B cell (primary cell): ENCODE measurements at regions of chr19 and their contacts with region 1.

Region 1: GRCh38 chr19:37466798-37467607 is at the start of gene ZNF569:
- DNase-seq: peak; percentile 95
- ATAC-seq: peak; percentile 69
- H3K4me3 ChIP-seq: peak within 1 kb of the TSS; percentile 80 to 98 (median 86)
- H3K4me3 Mint-ChIP-seq: peak within 1 kb of the TSS; percentile 99
- H3K27ac ChIP-seq: peak within 1 kb of the TSS; percentile 77
- H3K27ac Mint-ChIP-seq: peak within 1 kb of the TSS; percentile 98
- H3K4me1 ChIP-seq: peaks cover 14 to 32% of the 10 kb centered on the region in 2 donors
- H3K4me1 Mint-ChIP-seq: peaks cover 32% of the 10 kb centered on the region
- H3K27me3 ChIP-seq: no peaks in the 10 kb centered on the region
- H3K27me3 Mint-ChIP-seq: no peaks in the 10 kb centered on the region
- CTCF ChIP-seq: no peak
- total RNA-seq, gene ZNF569: 11.1 and 13.9 TPM in 2 replicates

Region 2: GRCh38 chr19:36665832-36666231 is 801.2 kb before region 1 on chr19:
- CTCF ChIA-PET with region 1: no interaction called
- POLR2A ChIA-PET with region 1: no interaction called
- intact Hi-C with region 1: loop called (anchors 5 kb)
- DNase-seq: peak; percentile 31
- ATAC-seq: no peak
- H3K4me3 ChIP-seq: peak overlapping the region; percentile 63 to 91 (median 80)
- H3K4me3 Mint-ChIP-seq: peak overlapping the region; percentile 98
- H3K27ac ChIP-seq: peak overlapping the region in 1 of 2 donors; percentile 81
- H3K27ac Mint-ChIP-seq: peak overlapping the region; percentile 90
- H3K4me1 ChIP-seq: peaks cover 15 to 19% of the 10 kb centered on the region in 2 donors
- H3K4me1 Mint-ChIP-seq: peaks cover 28% of the 10 kb centered on the region
- H3K27me3 ChIP-seq: no peaks in the 10 kb centered on the region
- H3K27me3 Mint-ChIP-seq: no peaks in the 10 kb centered on the region
- CTCF ChIP-seq: no peak

Region 3: DNA sequence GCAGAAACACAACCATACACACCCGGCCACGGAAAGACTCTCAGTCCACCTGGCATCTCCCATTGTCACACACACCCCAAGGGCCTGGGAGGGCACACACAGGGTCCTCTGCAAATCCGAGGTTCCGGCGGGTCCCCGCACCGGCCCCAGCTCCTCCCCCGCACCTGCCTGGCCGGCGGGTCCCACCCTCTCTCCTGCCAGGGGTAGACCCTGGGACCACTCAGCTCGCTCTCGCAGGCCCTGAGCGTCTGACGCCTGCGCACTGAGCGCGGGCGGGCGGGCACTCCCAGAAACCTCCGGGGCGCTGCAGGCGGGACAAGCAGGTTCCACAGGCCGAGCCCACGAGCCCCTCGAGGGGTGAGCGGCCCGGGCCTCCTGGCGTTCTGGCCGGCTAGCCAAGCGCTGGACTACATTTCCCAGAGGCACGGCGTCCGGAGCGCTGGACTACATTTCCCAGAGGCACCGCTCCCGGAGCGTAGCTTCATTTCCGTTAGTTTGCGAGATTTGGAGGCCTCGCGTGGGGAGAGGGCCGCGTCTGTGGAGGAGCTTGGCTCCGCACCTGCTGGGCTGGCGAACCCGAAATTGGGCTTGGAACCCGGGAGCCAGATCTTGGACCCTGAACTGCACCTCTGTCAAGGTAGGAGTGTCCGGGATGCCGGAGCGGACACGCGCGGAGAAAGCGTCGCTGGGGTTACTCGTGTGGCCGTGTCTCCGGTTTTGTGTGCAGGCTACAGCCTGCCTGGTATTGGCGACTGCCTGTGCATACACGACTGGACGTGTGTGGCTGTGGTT is 388.9 kb before region 1 on chr19 and contains the start of gene ZNF420:
- CTCF ChIA-PET with region 1: no interaction called
- POLR2A ChIA-PET with region 1: no interaction called
- intact Hi-C with region 1: loop called (anchors 5 kb)
- DNase-seq: peak; percentile 96
- ATAC-seq: peak; percentile 95
- H3K4me3 ChIP-seq: peak within 1 kb of the TSS; percentile 76 to 93 (median 85)
- H3K4me3 Mint-ChIP-seq: peak within 1 kb of the TSS; percentile 93
- H3K27ac ChIP-seq: peak within 1 kb of the TSS; percentile 71 to 89
- H3K27ac Mint-ChIP-seq: peak within 1 kb of the TSS; percentile 96
- H3K4me1 ChIP-seq: peaks cover 14 to 20% of the 10 kb centered on the region in 2 donors
- H3K4me1 Mint-ChIP-seq: peaks cover 29% of the 10 kb centered on the region
- H3K27me3 ChIP-seq: no peaks in the 10 kb centered on the region
- H3K27me3 Mint-ChIP-seq: no peaks in the 10 kb centered on the region
- CTCF ChIP-seq: no peak
- total RNA-seq, gene ZNF420: 17.4 and 24.9 TPM in 2 replicates

Region 4: DNA sequence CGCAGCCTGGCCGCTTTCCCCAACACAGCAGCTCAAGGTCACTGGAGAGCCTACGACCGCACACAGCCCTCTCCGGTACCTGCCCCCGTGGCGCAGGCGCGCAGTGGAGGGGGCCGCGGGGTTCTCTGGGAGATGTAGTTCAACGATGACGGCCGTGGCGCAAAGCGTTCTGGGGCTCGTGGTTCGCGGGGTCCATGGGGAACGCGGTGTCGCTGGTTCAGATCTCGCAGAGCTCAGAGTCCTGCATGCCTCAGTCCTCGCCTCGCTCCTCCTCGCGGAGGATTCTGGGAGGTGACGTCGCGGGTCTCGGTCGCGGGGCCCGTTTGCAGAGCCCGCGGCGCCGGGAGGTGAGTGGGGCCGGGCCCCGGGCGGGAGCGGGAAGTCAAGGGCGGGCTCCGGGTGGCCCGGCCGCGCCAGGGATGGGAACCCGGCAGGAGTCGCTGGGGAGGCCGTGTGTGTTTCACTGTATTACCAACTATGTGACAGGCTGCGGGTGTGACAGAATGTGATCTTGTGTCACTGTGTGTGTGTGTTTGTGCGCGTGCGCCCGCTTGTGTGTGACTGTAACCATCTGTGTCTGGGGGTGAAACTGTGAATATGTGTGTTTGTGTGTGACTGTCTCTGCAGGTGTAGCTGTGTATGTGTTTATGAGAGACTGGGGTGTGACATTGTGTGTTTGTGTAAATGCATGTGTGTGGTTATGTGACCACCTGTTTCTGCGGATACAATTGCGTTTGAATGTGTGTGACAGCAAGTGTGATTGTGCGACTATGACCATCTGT is 95.9 kb before region 1 on chr19 and contains the start of gene ZNF527:
- CTCF ChIA-PET with region 1: interaction called, 3 read pairs
- POLR2A ChIA-PET with region 1: interaction called, 7 read pairs
- intact Hi-C with region 1: loop called (anchors 1 kb)
- DNase-seq: peak; percentile 98
- ATAC-seq: peak; percentile 96
- H3K4me3 ChIP-seq: peak within 1 kb of the TSS; percentile 59 to 87 (median 79)
- H3K4me3 Mint-ChIP-seq: peak within 1 kb of the TSS; percentile 99
- H3K27ac ChIP-seq: peak within 1 kb of the TSS; percentile 73 to 87
- H3K27ac Mint-ChIP-seq: peak within 1 kb of the TSS; percentile 98
- H3K4me1 ChIP-seq: peaks cover 5 to 14% of the 10 kb centered on the region in 2 donors
- H3K4me1 Mint-ChIP-seq: peaks cover 12% of the 10 kb centered on the region
- H3K27me3 ChIP-seq: no peaks in the 10 kb centered on the region
- H3K27me3 Mint-ChIP-seq: no peaks in the 10 kb centered on the region
- CTCF ChIP-seq: peak; percentile 12
- total RNA-seq, gene ZNF527: 9.0 and 11.4 TPM in 2 replicates

Region 5: DNA sequence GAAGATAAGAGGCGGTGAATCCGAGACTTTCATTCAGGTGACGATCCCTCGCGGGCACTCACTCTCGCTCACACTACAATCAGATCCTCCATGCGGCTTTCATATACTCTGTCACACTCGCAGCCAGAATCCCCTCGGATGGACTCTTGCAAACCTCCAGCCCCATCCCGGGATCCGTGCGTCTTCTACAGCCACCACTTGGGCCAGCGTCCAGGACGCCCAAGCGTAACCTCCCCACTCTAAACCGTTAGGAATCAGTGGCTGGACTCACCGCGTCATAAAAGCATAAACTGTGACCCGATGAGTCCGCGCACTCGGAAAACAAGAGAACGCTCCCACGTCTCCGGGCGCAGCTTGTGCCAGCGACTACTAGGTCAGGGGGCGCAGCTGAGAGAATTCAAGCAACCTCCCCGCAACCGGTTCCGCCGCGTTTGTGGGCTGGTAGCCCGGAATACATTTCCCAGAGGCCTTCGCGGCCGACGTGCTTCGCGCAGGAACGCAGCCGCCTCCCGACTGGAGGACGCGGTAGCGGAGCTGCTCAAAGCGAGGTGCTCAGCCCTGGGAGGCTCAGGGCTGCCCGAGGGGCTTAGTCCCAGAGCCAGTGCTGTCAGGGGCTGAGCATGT is 225.0 kb after region 1 on chr19:
- CTCF ChIA-PET with region 1: no interaction called
- POLR2A ChIA-PET with region 1: no interaction called
- intact Hi-C with region 1: loop called (anchors 5 kb)
- DNase-seq: peak; percentile 90
- ATAC-seq: peak; percentile 97
- H3K4me3 ChIP-seq: peak overlapping the region; percentile 53 to 80 (median 68)
- H3K4me3 Mint-ChIP-seq: peak overlapping the region; percentile 99
- H3K27ac ChIP-seq: peak overlapping the region; percentile 68 to 74
- H3K27ac Mint-ChIP-seq: peak overlapping the region; percentile 98
- H3K4me1 ChIP-seq: peaks cover 0 to 4% of the 10 kb centered on the region in 2 donors
- H3K4me1 Mint-ChIP-seq: peaks cover 11% of the 10 kb centered on the region
- H3K27me3 ChIP-seq: no peaks in the 10 kb centered on the region
- H3K27me3 Mint-ChIP-seq: no peaks in the 10 kb centered on the region
- CTCF ChIP-seq: peak; percentile 27

Region 6: DNA sequence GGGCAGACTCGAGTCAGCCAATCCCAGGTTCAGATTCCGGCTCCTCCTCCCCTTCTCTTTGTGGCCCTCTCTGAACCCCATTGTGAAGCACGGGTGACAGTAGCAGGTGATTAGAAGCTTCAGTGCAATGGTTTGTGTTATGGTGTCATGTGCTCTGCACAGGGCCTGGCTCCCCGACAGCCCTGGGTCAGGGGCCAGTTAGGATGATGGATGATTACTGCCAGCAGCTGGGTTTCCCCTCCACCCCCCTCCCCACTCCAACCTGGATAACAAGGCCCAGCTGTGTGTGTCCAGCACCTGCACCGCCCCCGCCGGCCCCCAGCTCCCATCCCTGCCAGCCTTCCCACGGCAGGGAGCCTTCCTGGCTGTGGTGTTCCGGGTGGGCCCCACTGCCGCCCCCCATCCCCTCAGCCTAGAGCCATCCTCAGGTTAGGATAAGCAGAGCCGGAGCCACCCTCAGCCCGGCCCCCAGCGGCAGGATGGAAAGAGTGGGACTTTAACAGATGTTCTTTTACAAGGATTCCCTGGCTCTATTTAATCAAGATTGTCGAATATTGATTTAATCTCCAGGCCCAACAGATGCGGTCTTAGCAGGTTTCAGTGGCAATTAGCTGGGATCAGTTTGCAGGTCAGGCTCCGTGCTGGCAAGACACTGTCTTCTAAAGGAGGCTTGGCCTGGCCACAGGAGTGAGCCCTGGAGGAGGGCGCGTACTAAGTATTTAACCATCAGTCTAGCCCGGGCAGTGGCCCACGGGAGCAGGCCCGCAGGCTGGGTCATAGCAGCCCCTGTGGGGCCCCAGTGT is 596.2 kb after region 1 on chr19:
- CTCF ChIA-PET with region 1: no interaction called
- POLR2A ChIA-PET with region 1: no interaction called
- intact Hi-C with region 1: no loop called
- DNase-seq: no peak
- ATAC-seq: no peak
- H3K4me3 ChIP-seq: no peak overlapping the region
- H3K4me3 Mint-ChIP-seq: no peak overlapping the region
- H3K27ac ChIP-seq: peak overlapping the region in 1 of 2 donors; percentile 39
- H3K27ac Mint-ChIP-seq: peak overlapping the region; percentile 71
- H3K4me1 ChIP-seq: peaks cover 23 to 46% of the 10 kb centered on the region in 2 donors
- H3K4me1 Mint-ChIP-seq: peaks cover 46% of the 10 kb centered on the region
- H3K27me3 ChIP-seq: no peaks in the 10 kb centered on the region
- H3K27me3 Mint-ChIP-seq: no peaks in the 10 kb centered on the region
- CTCF ChIP-seq: no peak